ENCODE measurements at regions of chr9 and their contacts with region 1.

Region 1: DNA sequence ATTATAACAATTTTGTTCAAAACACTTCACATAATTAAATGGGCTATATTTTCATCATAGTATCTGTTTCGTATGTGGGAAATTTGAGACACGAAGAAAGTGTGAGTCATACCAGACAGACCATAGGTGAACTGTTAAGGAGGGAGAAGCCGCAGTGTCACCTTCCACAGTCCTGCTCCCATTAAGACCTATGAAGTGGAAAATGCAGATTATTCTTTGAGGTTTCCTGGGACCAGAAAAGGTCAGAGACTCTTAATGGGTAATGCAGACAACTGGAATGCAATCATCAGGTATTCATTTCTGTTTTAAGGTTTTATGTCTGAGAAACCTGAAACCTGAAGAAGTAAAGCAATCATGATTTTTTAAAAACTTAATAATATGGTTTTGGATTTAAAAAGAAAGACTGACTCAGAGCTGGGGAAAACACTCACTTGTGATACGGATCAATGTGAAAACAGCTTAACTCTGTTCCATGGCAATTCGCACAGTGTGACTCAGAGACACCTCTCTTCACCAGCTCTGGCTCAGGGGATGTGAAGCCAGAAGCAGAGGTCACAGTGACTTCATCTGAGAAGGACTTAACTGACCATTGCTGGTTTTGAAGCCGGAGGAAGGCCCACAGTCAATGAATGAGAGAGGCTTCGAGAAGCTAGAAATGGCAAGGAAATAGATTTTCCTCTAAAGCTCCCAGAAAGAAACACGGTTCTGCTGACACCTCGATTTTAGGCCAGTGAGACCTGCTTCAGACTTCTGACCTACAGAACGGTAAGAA is 17.2 kb upstream of the GCNT1 start:
- DNase-seq: no peak
- H3K27ac ChIP-seq: no peak overlapping the region
- CTCF ChIP-seq: no peak

Region 2: GRCh38 chr9:76269818-76270217 is 171.9 kb before region 1 on chr9:
- CTCF ChIA-PET with region 1: no interaction called
- POLR2A ChIA-PET with region 1: no interaction called
- DNase-seq: peak; percentile 17
- H3K27ac ChIP-seq: no peak overlapping the region
- CTCF ChIP-seq: no peak

Region 3: GRCh38 chr9:76419782-76420380 is 21.9 kb before region 1 on chr9:
- CTCF ChIA-PET with region 1: no interaction called
- POLR2A ChIA-PET with region 1: no interaction called
- DNase-seq: peak; percentile 22
- H3K27ac ChIP-seq: no peak overlapping the region
- CTCF ChIP-seq: peak; percentile 22; the same call in 1 of the 2 replicates

Region 4: DNA sequence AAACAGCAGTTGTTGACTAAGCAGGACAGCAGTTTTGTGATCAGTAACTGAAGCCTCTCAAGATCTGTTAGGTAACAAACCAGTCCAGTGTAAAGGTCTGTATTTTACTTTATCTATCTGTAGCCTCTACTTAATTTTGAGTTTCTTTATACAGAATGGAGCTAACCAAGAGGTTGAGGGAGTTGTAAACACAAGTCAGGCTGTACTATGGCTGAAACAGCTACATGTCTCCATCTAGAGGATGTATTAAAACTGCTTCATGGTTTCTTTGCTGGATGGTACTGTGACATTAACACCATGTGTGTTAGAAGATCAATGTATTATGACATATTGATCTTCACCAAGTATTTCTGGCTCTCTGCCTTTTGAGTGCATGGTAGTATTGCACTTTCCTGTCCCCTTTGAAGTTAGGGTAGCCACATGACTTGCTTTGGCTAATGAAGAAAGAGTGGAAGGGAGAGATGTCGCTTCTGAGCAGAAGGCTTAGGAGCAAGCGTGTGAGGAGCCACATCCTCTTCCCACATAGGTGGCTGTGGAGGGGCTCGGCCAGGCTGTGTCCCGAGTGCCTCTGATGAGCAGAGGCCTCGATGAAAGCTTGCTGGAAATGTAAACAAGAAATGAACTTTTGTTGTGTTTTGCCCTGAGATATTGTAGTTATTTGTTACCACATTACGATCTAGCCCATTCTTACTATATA is 216.9 kb after region 1 on chr9:
- CTCF ChIA-PET with region 1: interaction called, 11 read pairs
- POLR2A ChIA-PET with region 1: interaction called, 10 read pairs
- DNase-seq: peak; percentile 56
- H3K27ac ChIP-seq: no peak overlapping the region
- CTCF ChIP-seq: peak; percentile 23; the same call in 1 of the 2 replicates

Region 5: DNA sequence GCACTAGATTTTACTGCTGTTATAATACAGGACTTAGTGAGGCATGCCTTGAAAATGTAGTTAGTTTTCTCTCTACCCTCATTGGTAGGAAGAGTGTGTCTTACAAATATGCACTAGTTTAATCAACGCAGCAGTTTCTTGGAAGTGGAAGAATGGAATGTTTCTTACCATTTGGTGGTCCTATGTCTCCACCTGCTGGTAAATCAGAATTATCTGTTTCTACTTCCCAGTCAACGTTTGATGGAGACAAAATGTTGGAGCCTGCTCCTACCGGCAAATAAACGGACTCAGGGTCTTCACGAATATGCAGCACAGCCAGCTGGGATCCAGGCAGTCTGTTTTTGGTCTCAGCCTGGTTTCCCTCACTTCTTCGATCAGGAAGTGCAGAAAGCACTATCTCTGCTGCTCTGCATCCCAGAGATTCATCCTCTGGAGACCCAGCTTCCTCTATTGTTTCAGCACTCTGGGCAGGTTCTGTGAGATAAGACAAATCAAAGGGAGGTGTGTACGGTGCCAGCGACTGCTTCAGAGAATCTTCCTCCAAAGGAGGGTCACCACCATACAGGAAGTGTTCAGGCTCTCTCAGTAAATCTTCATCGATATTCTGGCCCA is 263.0 kb after region 1 on chr9:
- CTCF ChIA-PET with region 1: interaction called, 12 read pairs
- POLR2A ChIA-PET with region 1: no interaction called
- DNase-seq: peak; percentile 70
- H3K27ac ChIP-seq: no peak overlapping the region
- CTCF ChIP-seq: peak; percentile 53

Region 6: GRCh38 chr9:77215874-77216273 is 774.1 kb after region 1 on chr9:
- CTCF ChIA-PET with region 1: no interaction called
- POLR2A ChIA-PET with region 1: no interaction called
- DNase-seq: no peak
- H3K27ac ChIP-seq: no peak overlapping the region
- CTCF ChIP-seq: no peak